ENCODE measurements at regions of chr18 and their contacts with region 1.

Region 1: GRCh38 chr18:3585656-3586509 is 135.9 kb downstream of the TGIF1 start:
- DNase-seq: peak; percentile 93
- H3K4me3 ChIP-seq: peak overlapping the region; percentile 63
- H3K27ac ChIP-seq: peak overlapping the region; percentile 99
- H3K4me1 ChIP-seq: peaks cover 73% of the 10 kb centered on the region
- CTCF ChIP-seq: peak; percentile 98

Region 2: GRCh38 chr18:3177902-3178687 is 407.8 kb before region 1 on chr18:
- CTCF ChIA-PET with region 1: no interaction called
- POLR2A ChIA-PET with region 1: no interaction called
- intact Hi-C with region 1: loop called (anchors 5 kb)
- DNase-seq: peak; percentile 90
- H3K4me3 ChIP-seq: peak overlapping the region; percentile 20
- H3K27ac ChIP-seq: peak overlapping the region; percentile 91
- H3K4me1 ChIP-seq: peaks cover 53% of the 10 kb centered on the region
- CTCF ChIP-seq: no peak

Region 3: GRCh38 chr18:3402982-3403451 is 182.9 kb before region 1 on chr18:
- CTCF ChIA-PET with region 1: no interaction called
- POLR2A ChIA-PET with region 1: interaction called, 4 read pairs
- intact Hi-C with region 1: loop called (anchors 2 kb)
- DNase-seq: peak; percentile 68
- H3K4me3 ChIP-seq: peak overlapping the region; percentile 19
- H3K27ac ChIP-seq: peak overlapping the region; percentile 84
- H3K4me1 ChIP-seq: peaks cover 44% of the 10 kb centered on the region
- CTCF ChIP-seq: no peak

Region 4: DNA sequence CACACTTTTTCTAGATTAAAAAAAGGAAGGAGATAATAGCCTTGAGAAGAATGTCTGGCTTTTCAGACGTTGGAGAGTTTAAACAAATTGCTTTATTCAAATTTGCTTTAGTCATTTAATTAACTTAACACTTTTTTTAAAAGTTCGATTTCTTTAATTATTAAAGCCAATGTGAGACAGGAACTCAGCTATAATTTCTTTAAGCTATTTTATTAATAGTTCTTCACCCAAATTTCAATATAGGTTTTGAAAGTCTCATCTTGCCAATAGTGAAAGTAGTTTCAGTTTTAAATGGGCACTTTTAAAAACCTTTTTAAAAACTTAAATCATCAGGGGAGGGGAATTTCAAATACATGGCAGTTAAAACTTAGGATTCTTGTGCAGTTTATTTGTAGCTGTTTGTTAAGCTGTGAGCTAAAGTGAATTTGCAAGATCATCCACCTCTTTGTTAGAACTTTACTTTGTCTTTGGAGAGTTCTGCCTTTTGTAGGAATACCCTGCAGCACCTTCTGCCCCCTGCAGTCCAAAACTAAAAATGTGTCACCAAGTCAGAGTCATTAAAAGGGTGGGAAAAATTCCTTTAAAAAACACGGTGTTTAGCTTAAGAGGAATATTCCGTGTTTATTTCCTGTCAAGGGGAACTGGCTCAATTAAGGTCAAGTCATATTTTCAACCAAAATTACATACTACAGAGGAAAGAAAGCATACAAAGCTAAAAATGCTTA is 131.4 kb before region 1 on chr18:
- CTCF ChIA-PET with region 1: interaction called, 3 read pairs
- POLR2A ChIA-PET with region 1: interaction called, 17 read pairs
- intact Hi-C with region 1: loop called (anchors 1 kb)
- DNase-seq: peak; percentile 61
- H3K4me3 ChIP-seq: peak overlapping the region; percentile 88
- H3K27ac ChIP-seq: peak overlapping the region; percentile 72
- H3K4me1 ChIP-seq: peaks cover 48% of the 10 kb centered on the region
- CTCF ChIP-seq: peak; percentile 98

Region 5: GRCh38 chr18:3660739-3661515 is 75.0 kb after region 1 on chr18:
- CTCF ChIA-PET with region 1: interaction called, 3 read pairs
- POLR2A ChIA-PET with region 1: interaction called, 15 read pairs
- intact Hi-C with region 1: no loop called
- DNase-seq: peak; percentile 73
- H3K4me3 ChIP-seq: peak overlapping the region; percentile 53
- H3K27ac ChIP-seq: peak overlapping the region; percentile 97
- H3K4me1 ChIP-seq: peaks cover 68% of the 10 kb centered on the region
- CTCF ChIP-seq: no peak

Region 6: GRCh38 chr18:3914833-3915610 is 329.1 kb after region 1 on chr18:
- CTCF ChIA-PET with region 1: no interaction called
- POLR2A ChIA-PET with region 1: no interaction called
- intact Hi-C with region 1: loop called (anchors 10 kb)
- DNase-seq: peak; percentile 91
- H3K4me3 ChIP-seq: peak overlapping the region; percentile 43
- H3K27ac ChIP-seq: peak overlapping the region; percentile 93
- H3K4me1 ChIP-seq: peaks cover 71% of the 10 kb centered on the region
- CTCF ChIP-seq: no peak

Measured in OCI-LY7 (cell line).